ENCODE measurements at regions of chr4 and their contacts with region 1.

Region 1: GRCh38 chr4:87848622-87849351 is 16.0 kb downstream of the MEPE start:
- DNase-seq: peak; percentile 55
- H3K4me3 ChIP-seq: no peak overlapping the region
- H3K27ac ChIP-seq: no peak overlapping the region
- H3K4me1 ChIP-seq: peaks cover 6% of the 10 kb centered on the region
- H3K27me3 ChIP-seq: no peaks in the 10 kb centered on the region
- CTCF ChIP-seq: peak; percentile 49 to 66
- POLR2A ChIP-seq: no peak

Region 2: GRCh38 chr4:87353592-87353991 is 495.2 kb before region 1 on chr4:
- CTCF ChIA-PET with region 1: interaction called, 14 read pairs
- POLR2A ChIA-PET with region 1: no interaction called
- dilution Hi-C with region 1: no loop called
- intact Hi-C with region 1: loop called (anchors 5 kb)
- DNase-seq: peak; percentile 67
- H3K4me3 ChIP-seq: no peak overlapping the region
- H3K27ac ChIP-seq: no peak overlapping the region
- H3K4me1 ChIP-seq: no peaks in the 10 kb centered on the region
- H3K27me3 ChIP-seq: no peaks in the 10 kb centered on the region
- CTCF ChIP-seq: peak; percentile 57
- POLR2A ChIP-seq: no peak

Region 3: DNA sequence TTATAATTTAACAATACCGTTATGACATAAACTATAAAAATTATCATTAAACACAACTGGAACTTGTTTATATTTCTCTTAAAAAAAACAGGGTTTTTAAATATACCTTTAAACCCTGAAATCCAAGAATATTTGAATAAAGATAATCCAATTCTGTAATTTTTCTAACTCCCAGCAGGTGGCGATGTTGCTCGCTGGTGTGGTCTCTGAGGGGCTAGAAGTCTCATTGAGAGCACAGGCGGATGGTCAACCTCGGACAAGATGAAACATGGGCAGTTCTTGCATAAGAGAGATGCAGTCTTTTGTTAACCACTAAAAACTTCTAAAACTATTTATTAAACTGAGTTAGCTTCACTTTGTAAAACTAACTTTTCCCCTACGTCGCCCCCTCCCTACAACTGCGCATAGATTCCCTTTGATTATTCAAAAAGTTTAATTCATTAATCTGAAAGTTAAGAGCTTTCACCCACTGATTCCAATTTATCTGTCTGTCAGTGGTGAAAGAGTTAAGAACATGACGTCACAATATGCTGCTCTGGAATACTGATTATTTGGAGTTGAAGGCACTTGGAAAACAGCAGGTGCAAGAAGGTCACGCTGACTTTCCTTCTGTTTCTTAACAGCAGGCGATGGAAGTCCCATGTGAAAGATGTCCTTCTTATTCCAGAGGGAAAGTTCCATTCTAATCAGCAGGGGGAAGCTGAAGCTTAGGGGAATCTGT is 169.2 kb before region 1 on chr4:
- CTCF ChIA-PET with region 1: interaction called, 23 read pairs
- POLR2A ChIA-PET with region 1: interaction called, 3 read pairs
- dilution Hi-C with region 1: no loop called
- intact Hi-C with region 1: loop called (anchors 1 kb)
- DNase-seq: peak; percentile 52
- H3K4me3 ChIP-seq: no peak overlapping the region
- H3K27ac ChIP-seq: no peak overlapping the region
- H3K4me1 ChIP-seq: no peaks in the 10 kb centered on the region
- H3K27me3 ChIP-seq: no peaks in the 10 kb centered on the region
- CTCF ChIP-seq: peak; percentile 61 to 76
- POLR2A ChIP-seq: no peak

Region 4: DNA sequence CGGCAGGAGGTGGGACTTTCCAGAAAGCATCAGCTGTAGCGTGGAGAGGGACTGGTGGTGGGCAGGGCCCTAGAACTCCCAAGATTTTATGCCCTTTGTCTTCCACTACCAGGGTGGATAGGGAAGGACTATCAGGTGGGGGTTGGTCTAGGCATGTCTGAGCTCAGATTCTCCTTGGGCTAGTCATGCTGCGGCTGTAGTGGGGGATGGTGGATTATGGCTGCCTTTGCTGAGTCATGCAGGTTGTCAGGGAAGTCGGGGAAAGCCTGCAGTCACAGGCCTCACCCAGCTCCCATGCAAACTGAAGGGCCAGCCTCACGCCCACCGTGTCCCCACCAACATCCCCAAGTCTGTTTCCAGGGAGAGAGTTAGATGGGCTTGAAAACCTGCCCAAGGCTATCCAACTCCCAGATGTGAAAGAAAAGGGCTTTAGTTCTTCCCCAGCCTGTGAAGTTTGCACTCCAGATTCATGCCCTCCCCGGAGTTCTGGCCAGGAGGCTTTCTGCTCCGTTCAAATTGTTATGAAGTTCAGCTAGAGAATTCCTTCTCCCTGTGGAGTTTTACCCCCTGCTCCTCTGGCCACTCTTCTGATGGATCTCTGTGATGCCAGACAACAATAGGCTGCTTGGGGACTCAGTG is 29.4 kb before region 1 on chr4:
- CTCF ChIA-PET with region 1: no interaction called
- POLR2A ChIA-PET with region 1: no interaction called
- dilution Hi-C with region 1: no loop called
- intact Hi-C with region 1: no loop called
- DNase-seq: no peak
- H3K4me3 ChIP-seq: no peak overlapping the region
- H3K27ac ChIP-seq: no peak overlapping the region
- H3K4me1 ChIP-seq: no peaks in the 10 kb centered on the region
- H3K27me3 ChIP-seq: peaks cover 0 to 4% of the 10 kb centered on the region in 2 experiments
- CTCF ChIP-seq: no peak
- POLR2A ChIP-seq: no peak

Region 5: GRCh38 chr4:87965501-87965975 is 116.8 kb after region 1 on chr4:
- CTCF ChIA-PET with region 1: interaction called, 412 read pairs
- POLR2A ChIA-PET with region 1: no interaction called
- dilution Hi-C with region 1: no loop called
- intact Hi-C with region 1: no loop called
- DNase-seq: no peak
- H3K4me3 ChIP-seq: no peak overlapping the region
- H3K27ac ChIP-seq: no peak overlapping the region
- H3K4me1 ChIP-seq: no peaks in the 10 kb centered on the region
- H3K27me3 ChIP-seq: no peaks in the 10 kb centered on the region
- CTCF ChIP-seq: no peak
- POLR2A ChIP-seq: no peak

Region 6: DNA sequence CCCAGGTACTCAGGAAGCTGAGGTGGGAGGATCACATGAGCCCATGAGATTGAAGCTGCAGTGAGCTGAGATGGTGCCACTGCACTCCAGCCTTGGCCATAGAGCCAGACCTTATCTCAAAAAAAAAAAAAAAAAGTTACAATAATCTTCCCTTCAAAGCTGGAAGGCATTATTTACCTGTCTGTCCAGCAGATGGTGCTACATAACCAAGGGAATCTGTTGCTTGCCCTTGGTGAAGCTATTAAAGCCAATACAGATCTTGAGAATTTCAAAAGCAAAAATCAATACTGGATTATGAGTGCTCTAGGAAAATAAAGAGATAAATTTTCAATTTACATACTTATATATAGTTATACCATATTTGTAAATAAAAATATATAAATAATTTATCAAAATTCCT is 184.5 kb after region 1 on chr4:
- CTCF ChIA-PET with region 1: interaction called, 24 read pairs
- POLR2A ChIA-PET with region 1: no interaction called
- dilution Hi-C with region 1: no loop called
- intact Hi-C with region 1: no loop called
- DNase-seq: peak; percentile 69
- H3K4me3 ChIP-seq: no peak overlapping the region
- H3K27ac ChIP-seq: no peak overlapping the region
- H3K4me1 ChIP-seq: no peaks in the 10 kb centered on the region
- H3K27me3 ChIP-seq: no peaks in the 10 kb centered on the region
- CTCF ChIP-seq: peak; percentile 43 to 55
- POLR2A ChIP-seq: no peak

Region 7: GRCh38 chr4:88211473-88212252 is 362.9 kb after region 1 on chr4:
- CTCF ChIA-PET with region 1: interaction called, 51 read pairs
- POLR2A ChIA-PET with region 1: no interaction called
- dilution Hi-C with region 1: no loop called
- intact Hi-C with region 1: loop called (anchors 1 kb)
- DNase-seq: peak; percentile 69
- H3K4me3 ChIP-seq: no peak overlapping the region
- H3K27ac ChIP-seq: no peak overlapping the region
- H3K4me1 ChIP-seq: no peaks in the 10 kb centered on the region
- H3K27me3 ChIP-seq: no peaks in the 10 kb centered on the region
- CTCF ChIP-seq: peak; percentile 41 to 43
- POLR2A ChIP-seq: no peak

Region 8: GRCh38 chr4:88230969-88231771 is 382.4 kb after region 1 on chr4:
- CTCF ChIA-PET with region 1: no interaction called
- POLR2A ChIA-PET with region 1: no interaction called
- dilution Hi-C with region 1: no loop called
- intact Hi-C with region 1: no loop called
- DNase-seq: peak; percentile 79
- H3K4me3 ChIP-seq: peak overlapping the region in 2 of 3 experiments; percentile 21 to 50
- H3K27ac ChIP-seq: peak overlapping the region; percentile 89
- H3K4me1 ChIP-seq: peaks cover 16% of the 10 kb centered on the region
- H3K27me3 ChIP-seq: no peaks in the 10 kb centered on the region
- CTCF ChIP-seq: no peak
- POLR2A ChIP-seq: no peak

Region 9: DNA sequence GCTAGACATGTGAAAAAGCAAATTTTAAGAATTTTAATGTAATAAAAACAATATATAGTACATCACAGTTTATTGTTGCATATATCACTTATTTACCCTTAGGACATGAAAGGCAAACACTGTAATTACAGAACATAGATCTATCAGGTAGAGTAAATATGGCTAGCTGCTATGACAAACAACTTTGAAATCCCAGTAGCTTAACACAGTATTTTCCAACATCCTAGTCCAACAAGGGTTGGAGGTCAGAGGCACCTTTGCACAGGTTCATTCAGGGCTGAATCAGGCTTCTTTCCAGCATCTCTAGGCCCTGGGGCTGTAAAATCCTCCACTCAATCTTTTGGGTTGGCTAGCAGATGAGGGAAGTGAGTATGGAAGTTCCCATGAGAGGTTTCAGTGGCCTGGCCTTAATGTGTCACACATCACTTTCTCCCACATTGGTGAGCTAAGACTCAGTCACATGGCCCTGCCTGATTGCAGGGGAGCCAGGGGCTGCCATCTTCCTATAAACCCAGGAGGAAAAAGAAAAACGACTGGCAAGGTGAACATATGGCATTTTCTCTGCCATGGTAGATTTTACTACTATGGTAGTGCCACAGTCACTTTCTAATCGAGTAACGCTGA is 562.8 kb after region 1 on chr4:
- CTCF ChIA-PET with region 1: no interaction called
- POLR2A ChIA-PET with region 1: no interaction called
- dilution Hi-C with region 1: no loop called
- intact Hi-C with region 1: no loop called
- DNase-seq: no peak
- H3K4me3 ChIP-seq: no peak overlapping the region
- H3K27ac ChIP-seq: no peak overlapping the region
- H3K4me1 ChIP-seq: no peaks in the 10 kb centered on the region
- H3K27me3 ChIP-seq: no peaks in the 10 kb centered on the region
- CTCF ChIP-seq: no peak
- POLR2A ChIP-seq: no peak

Region 10: GRCh38 chr4:88828842-88829571 is 980.2 kb after region 1 on chr4:
- CTCF ChIA-PET with region 1: no interaction called
- POLR2A ChIA-PET with region 1: no interaction called
- dilution Hi-C with region 1: no loop called
- intact Hi-C with region 1: no loop called
- DNase-seq: no peak
- H3K4me3 ChIP-seq: no peak overlapping the region
- H3K27ac ChIP-seq: no peak overlapping the region
- H3K4me1 ChIP-seq: peaks cover 2% of the 10 kb centered on the region
- H3K27me3 ChIP-seq: no peaks in the 10 kb centered on the region
- CTCF ChIP-seq: no peak
- POLR2A ChIP-seq: no peak

Measured in endothelial cell of umbilical vein (primary cell).